ENCODE measurements at regions of chr10 and their contacts with region 1.

Region 1: DNA sequence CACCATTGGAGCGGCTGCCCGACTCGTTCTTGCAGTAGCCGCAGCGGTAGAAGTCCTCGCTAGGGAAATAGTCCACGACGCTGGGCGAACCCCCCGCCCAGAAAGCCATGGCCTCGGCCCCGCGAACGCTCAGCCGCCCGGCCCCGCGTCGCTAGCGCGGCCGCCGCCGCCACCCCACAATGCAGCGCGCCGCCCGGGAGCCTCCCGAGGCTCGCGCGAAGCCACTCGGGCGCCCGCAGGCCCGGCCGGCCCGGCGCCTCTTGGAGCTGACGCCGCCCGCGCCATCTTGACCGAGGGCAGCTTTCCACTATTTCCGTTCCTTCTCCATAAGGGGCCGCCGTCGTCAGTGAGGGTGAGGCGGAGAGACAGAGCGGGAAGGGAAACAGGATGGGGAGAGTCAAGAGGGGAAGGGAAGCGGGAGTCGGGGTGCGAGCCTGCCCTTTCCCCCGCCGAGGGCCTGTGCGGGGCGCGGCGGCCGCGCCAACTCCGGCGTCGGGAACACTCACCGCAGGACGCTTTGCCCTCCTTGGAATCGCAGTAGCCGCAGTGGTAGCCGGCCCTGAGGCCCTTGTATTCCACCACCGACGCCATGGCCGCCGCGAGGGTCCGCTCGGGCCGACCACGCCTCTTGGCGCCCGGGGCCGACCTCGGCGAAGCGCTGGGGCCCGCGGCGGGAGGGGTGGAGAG is at the start of gene ATE1:
- DNase-seq: peak; percentile 94
- ATAC-seq: peak; percentile 98
- total RNA-seq, gene ATE1: 31.5 TPM

Region 2: GRCh38 chr10:121974535-121975294 is 46.7 kb after region 1 on chr10 and contains the start of gene NSMCE4A:
- intact Hi-C with region 1: loop called (anchors 2 kb)
- DNase-seq: peak; percentile 90
- ATAC-seq: peak; percentile 92
- total RNA-seq, gene NSMCE4A: 26.6 TPM

Region 3: DNA sequence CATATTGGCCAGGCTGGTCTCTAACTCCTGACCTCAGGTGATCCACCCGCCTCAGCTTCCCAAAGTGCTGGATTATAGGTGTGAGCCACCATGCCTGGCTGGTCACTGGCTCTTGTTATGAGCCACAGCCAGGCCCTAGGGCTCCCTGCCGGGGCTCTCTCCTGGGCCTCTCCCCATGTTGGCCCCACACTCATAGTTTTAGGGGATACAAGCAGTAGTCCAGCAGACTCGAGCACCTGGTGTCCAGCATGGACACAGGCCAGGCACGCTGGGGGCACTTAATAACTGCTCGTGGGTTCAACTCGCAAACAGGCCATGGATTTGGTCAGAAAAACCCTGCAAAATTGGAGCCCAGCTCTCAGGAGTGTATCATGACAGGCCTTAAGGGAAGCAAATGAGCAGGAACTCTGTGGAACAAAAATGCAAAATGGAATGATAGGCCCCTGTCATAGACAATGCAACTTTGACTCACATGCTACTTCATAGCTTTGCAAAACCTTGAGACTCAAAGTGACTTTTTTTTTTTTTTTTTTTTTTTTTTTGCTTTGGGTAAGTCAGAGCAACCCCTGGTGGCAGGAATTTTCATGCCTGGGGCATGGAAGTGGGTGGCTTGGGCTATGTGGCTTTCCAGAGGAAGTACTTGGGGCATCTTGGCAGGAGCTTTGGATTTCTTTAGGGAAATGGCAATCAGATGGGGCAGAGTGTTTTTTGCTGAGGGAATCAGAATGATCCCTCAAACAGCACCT is 123.4 kb after region 1 on chr10:
- intact Hi-C with region 1: loop called (anchors 5 kb)
- DNase-seq: no peak
- ATAC-seq: peak; percentile 26